ENCODE measurements at regions of chr7 and their contacts with region 1.

Region 1: GRCh38 chr7:25149836-25150235 is 24.8 kb upstream of the CYCS start:
- DNase-seq: no peak
- ATAC-seq: no peak
- H3K4me3 Mint-ChIP-seq: no peak overlapping the region
- H3K27ac Mint-ChIP-seq: peak overlapping the region; percentile 90
- H3K4me1 Mint-ChIP-seq: peaks cover 25% of the 10 kb centered on the region
- H3K27me3 Mint-ChIP-seq: no peaks in the 10 kb centered on the region

Region 2: GRCh38 chr7:25117226-25118047 is 32.4 kb before region 1 on chr7:
- CTCF ChIA-PET with region 1: no interaction called
- POLR2A ChIA-PET with region 1: interaction called, 11 read pairs
- intact Hi-C with region 1: loop called in 1 of 2 experiments (anchors 1 kb)
- DNase-seq: no peak
- ATAC-seq: peak; percentile 86
- H3K4me3 Mint-ChIP-seq: peak overlapping the region; percentile 12
- H3K27ac Mint-ChIP-seq: peak overlapping the region; percentile 43
- H3K4me1 Mint-ChIP-seq: peaks cover 53% of the 10 kb centered on the region
- H3K27me3 Mint-ChIP-seq: no peaks in the 10 kb centered on the region

Region 3: DNA sequence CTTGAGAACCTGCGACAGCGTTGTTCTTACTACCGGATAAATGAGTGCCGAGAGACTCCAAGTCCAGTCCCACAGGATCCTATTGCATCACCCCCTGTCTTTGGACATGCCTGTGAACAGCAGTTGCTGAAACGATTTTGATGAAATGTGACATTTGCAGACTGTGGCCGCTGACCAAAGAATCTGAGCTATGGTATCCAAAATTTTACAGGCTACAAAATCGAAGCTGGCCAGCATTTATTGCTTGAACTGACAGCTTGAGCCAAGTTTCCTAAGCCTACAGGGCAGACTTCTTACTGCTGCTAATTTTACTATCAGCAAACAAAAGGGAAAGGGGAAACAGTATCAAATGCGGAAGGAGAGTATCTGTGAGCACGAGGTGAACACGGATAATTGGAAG is 90.5 kb after region 1 on chr7:
- CTCF ChIA-PET with region 1: no interaction called
- POLR2A ChIA-PET with region 1: no interaction called
- intact Hi-C with region 1: no loop called
- DNase-seq: no peak
- ATAC-seq: no peak
- H3K4me3 Mint-ChIP-seq: no peak overlapping the region
- H3K27ac Mint-ChIP-seq: no peak overlapping the region
- H3K4me1 Mint-ChIP-seq: no peaks in the 10 kb centered on the region
- H3K27me3 Mint-ChIP-seq: peaks cover 4% of the 10 kb centered on the region